Ovary (tissue), 10 donors: ENCODE measurements at regions of chr19 and their contacts with region 1.

Region 1: GRCh38 chr19:32971715-32972540 is at the starts of genes CEP89 and FAAP24:
- DNase-seq: peak; percentile 97 to 99 (median 98)
- H3K4me3 ChIP-seq: peak within 1 kb of the TSS; percentile 96
- H3K27ac ChIP-seq: peak within 1 kb of the TSS in 1 of 2 donors; percentile 67
- H3K4me1 ChIP-seq: peaks cover 8% of the 10 kb centered on the region
- H3K27me3 ChIP-seq: no peaks in the 10 kb centered on the region
- CTCF ChIP-seq: no peak
- EP300 ChIP-seq: no peak
- POLR2A ChIP-seq: no peak
- total RNA-seq, gene CEP89: 13.0 to 28.3 (median 24.5) TPM
- total RNA-seq, gene FAAP24: 0.57 to 2.7 (median 1.4) TPM

Region 2: GRCh38 chr19:32464279-32464678 is 507.6 kb before region 1 on chr19:
- intact Hi-C with region 1: no loop called
- DNase-seq: no peak
- H3K4me3 ChIP-seq: no peak overlapping the region
- H3K27ac ChIP-seq: no peak overlapping the region
- H3K4me1 ChIP-seq: no peaks in the 10 kb centered on the region
- H3K27me3 ChIP-seq: no peaks in the 10 kb centered on the region
- CTCF ChIP-seq: no peak
- EP300 ChIP-seq: no peak
- POLR2A ChIP-seq: no peak

Region 3: DNA sequence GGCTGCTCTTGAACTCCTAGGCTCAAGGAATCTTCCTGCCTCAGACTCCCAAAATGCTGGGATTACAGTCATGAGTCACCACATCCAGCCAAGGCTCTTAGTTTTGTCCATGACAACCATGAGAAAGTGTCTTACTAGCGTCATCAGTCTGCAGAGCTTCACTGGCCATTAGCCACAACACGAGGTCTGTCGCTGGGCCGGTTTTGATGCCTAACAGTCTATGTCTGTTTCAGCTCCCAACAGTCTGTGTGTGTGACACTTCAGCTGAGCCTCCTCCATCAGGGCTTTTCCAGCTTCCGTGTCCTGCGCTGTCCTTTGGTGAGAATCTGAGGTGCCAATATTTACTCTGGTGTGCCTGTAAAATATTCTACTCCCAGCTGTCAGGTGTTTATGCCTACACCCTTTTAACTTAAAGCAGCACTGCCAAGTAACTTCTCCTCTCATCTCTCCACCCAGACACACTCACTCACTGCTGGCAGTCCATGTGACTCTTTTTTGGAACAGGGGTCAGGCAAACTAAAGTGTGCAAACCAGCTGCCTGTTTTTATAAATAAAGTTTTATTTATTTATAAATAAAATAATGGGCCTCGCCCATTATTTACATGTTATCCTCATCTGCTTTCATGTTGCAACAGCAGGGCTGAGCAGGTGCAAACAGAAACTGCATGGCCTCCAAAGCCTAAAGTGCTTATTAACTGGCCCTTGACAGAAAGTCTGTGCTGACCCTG is 47.6 kb before region 1 on chr19:
- intact Hi-C with region 1: no loop called
- DNase-seq: no peak
- H3K4me3 ChIP-seq: no peak overlapping the region
- H3K27ac ChIP-seq: no peak overlapping the region
- H3K4me1 ChIP-seq: no peaks in the 10 kb centered on the region
- H3K27me3 ChIP-seq: no peaks in the 10 kb centered on the region
- CTCF ChIP-seq: no peak
- EP300 ChIP-seq: no peak
- POLR2A ChIP-seq: no peak

Region 4: DNA sequence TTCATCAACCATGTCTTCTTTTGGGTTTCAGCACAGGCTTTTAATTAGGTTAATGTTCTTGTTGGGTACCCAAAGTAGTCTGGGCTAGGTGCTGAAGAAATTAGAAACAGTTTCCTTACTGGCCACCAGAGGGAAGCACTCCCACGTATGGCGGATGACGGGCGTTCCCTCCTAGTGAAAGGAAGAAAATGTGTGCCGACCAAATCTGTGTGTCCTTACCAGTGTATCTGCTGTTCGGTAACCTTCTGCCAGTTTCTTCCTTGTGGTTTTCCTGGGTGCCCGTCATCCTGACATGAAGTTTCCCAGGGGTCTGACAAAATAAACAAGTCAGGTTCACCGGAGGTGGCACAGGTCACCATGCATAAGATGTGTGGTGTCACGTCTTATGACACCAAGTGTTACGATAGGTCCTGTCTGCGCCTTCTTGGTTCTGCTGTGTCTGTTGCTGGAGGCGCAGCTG is 154.0 kb after region 1 on chr19:
- intact Hi-C with region 1: loop called in 1 of 4 experiments (anchors 10 kb)
- DNase-seq: peak; percentile 44 to 62 (median 45)
- H3K4me3 ChIP-seq: no peak overlapping the region
- H3K27ac ChIP-seq: no peak overlapping the region
- H3K4me1 ChIP-seq: no peaks in the 10 kb centered on the region
- H3K27me3 ChIP-seq: no peaks in the 10 kb centered on the region
- CTCF ChIP-seq: peak; percentile 52 to 85 (median 55)
- EP300 ChIP-seq: no peak
- POLR2A ChIP-seq: no peak

Region 5: GRCh38 chr19:33143897-33144405 is 172.0 kb after region 1 on chr19:
- intact Hi-C with region 1: no loop called
- DNase-seq: peak; percentile 32 to 73 (median 66)
- H3K4me3 ChIP-seq: no peak overlapping the region
- H3K27ac ChIP-seq: no peak overlapping the region
- H3K4me1 ChIP-seq: no peaks in the 10 kb centered on the region
- H3K27me3 ChIP-seq: no peaks in the 10 kb centered on the region
- CTCF ChIP-seq: peak; percentile 78 to 84 (median 81)
- EP300 ChIP-seq: no peak
- POLR2A ChIP-seq: no peak

Region 6: DNA sequence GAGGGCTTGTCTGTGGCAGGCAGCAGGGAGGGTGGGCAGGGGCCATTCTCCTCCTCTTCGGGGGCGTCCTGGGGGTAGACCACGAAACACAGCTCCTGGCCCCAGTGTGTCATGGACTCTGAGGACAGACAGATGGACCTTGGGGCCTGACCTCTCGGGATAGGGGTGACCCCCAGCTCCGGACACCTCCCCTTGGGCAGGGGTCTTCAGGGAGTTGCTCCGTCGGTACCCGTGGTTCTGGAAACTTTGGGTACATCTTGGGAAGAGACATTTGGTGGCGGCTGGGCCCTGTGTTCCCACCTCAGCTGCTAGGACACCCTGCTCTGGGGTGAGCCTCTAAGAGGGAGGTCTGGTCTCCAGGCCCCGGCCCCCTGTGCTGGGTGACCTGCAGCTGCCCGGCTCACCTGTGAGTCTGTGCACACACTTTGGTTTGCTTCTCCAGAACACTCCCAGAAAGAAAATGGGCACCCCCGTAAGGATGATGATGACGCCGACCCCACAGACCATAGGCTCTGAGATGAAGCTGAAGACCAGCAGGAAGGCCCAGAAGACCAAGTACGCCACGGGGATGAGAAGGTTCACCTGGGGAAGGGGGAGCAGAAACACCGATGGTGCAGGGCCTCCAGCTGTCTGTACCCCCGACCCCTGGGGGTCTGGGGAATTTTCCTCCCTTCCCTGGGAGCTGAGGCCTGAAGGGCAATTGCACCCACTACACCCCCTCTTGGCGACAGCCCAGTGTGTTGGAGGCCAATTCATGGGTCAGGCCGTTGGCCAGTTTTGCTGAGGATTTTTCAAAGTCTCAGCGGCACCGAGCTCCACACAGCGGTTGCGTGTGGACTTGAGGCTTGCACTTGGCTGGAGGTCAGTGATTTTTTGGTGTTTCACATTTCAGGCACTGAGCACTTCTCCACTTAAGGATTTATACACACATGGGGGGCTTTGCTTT is 237.2 kb after region 1 on chr19:
- intact Hi-C with region 1: loop called in 1 of 4 experiments (anchors 10 kb)
- DNase-seq: peak; percentile 59 to 86 (median 73)
- H3K4me3 ChIP-seq: no peak overlapping the region
- H3K27ac ChIP-seq: peak overlapping the region in 1 of 2 donors; percentile 21
- H3K4me1 ChIP-seq: no peaks in the 10 kb centered on the region
- H3K27me3 ChIP-seq: no peaks in the 10 kb centered on the region
- CTCF ChIP-seq: peak in 1 of 3 donors; percentile 13
- EP300 ChIP-seq: no peak
- POLR2A ChIP-seq: no peak